ENCODE measurements at regions of chr10 and their contacts with region 1.

Region 1: DNA sequence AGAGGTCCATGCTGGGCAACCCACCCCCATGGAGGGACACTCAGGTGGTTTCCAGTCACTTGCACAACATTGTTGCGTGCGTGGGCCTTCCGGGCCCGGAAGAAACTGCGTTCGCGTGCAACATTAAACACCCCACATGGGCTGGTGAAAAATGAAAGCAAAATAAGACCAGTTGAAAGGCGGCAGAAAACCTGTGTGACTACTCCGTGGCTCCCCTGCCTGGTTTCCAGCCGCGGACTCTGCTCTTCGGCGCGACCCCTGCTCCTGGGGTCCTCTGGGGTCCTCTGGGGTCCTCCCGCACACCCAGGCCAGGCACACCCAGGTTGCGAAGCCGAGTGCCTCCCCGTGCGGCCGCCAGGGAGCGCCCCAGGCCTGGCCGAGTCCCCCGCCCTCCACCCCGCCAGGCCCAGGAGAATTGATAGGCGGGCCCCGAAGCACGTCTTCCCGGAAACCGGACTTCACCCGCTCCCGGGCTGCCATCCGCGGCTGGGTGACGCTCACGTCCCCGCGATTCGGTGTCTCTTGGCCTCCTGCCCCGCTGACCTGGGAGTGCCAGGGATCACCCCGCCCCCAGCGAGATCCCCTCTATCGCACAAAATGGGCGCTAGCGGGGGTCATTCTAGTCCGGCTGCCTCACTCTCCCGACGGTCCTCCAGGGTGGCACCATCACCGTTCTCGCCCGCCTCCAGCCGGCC is 1.9 kb upstream of the SH2D4B start:
- DNase-seq: peak; percentile 80 to 86
- H3K4me3 ChIP-seq: peak overlapping the region; percentile 63
- H3K4me3 Mint-ChIP-seq: peak overlapping the region; percentile 81
- H3K27ac Mint-ChIP-seq: peak overlapping the region; percentile 93
- H3K4me1 ChIP-seq: peaks cover 4% of the 10 kb centered on the region; the same call in 1 of the 2 replicates
- H3K4me1 Mint-ChIP-seq: no peaks in the 10 kb centered on the region
- H3K27me3 ChIP-seq: no peaks in the 10 kb centered on the region
- H3K27me3 Mint-ChIP-seq: no peaks in the 10 kb centered on the region
- CTCF ChIP-seq: peak; percentile 72 to 94

Region 2: GRCh38 chr10:80523773-80524172 is 12.0 kb before region 1 on chr10:
- CTCF ChIA-PET with region 1: no interaction called
- POLR2A ChIA-PET with region 1: no interaction called
- intact Hi-C with region 1: loop called (anchors 1 kb)
- DNase-seq: no peak
- H3K4me3 ChIP-seq: no peak overlapping the region
- H3K4me3 Mint-ChIP-seq: peak overlapping the region; percentile 19
- H3K27ac Mint-ChIP-seq: peak overlapping the region; percentile 77
- H3K4me1 ChIP-seq: peaks cover 20% of the 10 kb centered on the region; the same call in 1 of the 2 replicates
- H3K4me1 Mint-ChIP-seq: peaks cover 16% of the 10 kb centered on the region
- H3K27me3 ChIP-seq: no peaks in the 10 kb centered on the region
- H3K27me3 Mint-ChIP-seq: no peaks in the 10 kb centered on the region
- CTCF ChIP-seq: no peak

Region 3: GRCh38 chr10:80583685-80584084 is 47.9 kb after region 1 on chr10:
- CTCF ChIA-PET with region 1: no interaction called
- POLR2A ChIA-PET with region 1: no interaction called
- intact Hi-C with region 1: loop called (anchors 1 kb)
- DNase-seq: no peak
- H3K4me3 ChIP-seq: no peak overlapping the region
- H3K4me3 Mint-ChIP-seq: no peak overlapping the region
- H3K27ac Mint-ChIP-seq: no peak overlapping the region
- H3K4me1 ChIP-seq: no peaks in the 10 kb centered on the region
- H3K4me1 Mint-ChIP-seq: no peaks in the 10 kb centered on the region
- H3K27me3 ChIP-seq: no peaks in the 10 kb centered on the region
- H3K27me3 Mint-ChIP-seq: peaks cover 2% of the 10 kb centered on the region
- CTCF ChIP-seq: no peak